IMR-90 (cell line): ENCODE measurements at regions of chr7 and their contacts with region 1.

Region 1: GRCh38 chr7:93715234-93715633 is 140.7 kb upstream of the CALCR start:
- DNase-seq: peak; percentile 39
- ATAC-seq: peak; percentile 82
- H3K4me3 ChIP-seq: no peak overlapping the region
- H3K27ac ChIP-seq: no peak overlapping the region
- H3K4me1 ChIP-seq: no peaks in the 10 kb centered on the region
- H3K27me3 ChIP-seq: no peaks in the 10 kb centered on the region; the same call in 1 of the 2 replicates
- CTCF ChIP-seq: peak; percentile 62
- POLR2A ChIP-seq: no peak
- RAD21 ChIP-seq: peak; percentile 63

Region 2: DNA sequence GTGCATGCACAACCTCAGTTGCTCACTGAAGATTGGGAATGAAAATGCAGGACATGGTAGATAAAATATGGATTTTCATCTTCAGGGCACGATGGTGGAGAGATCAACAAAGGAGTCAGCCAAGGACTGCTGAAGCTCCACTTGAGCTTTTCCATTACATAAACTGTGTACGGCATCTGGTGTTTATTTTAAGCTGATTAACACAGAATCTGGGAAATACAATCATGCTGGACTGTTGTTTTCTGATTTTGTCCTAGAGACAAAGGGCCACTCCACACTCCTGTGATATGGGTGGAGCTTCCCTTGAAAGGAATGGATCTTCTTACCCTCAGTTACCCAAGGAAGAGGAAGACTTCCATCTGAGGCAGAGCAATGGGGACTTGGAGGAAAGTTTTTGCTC is 718.1 kb before region 1 on chr7:
- CTCF ChIA-PET with region 1: no interaction called
- POLR2A ChIA-PET with region 1: no interaction called
- dilution Hi-C with region 1: no loop called
- in situ Hi-C with region 1: no loop called
- intact Hi-C with region 1: no loop called
- DNase-seq: no peak
- ATAC-seq: peak; percentile 77
- H3K4me3 ChIP-seq: no peak overlapping the region
- H3K27ac ChIP-seq: no peak overlapping the region
- H3K4me1 ChIP-seq: peaks cover 5% of the 10 kb centered on the region
- H3K27me3 ChIP-seq: no peaks in the 10 kb centered on the region
- CTCF ChIP-seq: no peak
- POLR2A ChIP-seq: no peak
- RAD21 ChIP-seq: no peak

Region 3: DNA sequence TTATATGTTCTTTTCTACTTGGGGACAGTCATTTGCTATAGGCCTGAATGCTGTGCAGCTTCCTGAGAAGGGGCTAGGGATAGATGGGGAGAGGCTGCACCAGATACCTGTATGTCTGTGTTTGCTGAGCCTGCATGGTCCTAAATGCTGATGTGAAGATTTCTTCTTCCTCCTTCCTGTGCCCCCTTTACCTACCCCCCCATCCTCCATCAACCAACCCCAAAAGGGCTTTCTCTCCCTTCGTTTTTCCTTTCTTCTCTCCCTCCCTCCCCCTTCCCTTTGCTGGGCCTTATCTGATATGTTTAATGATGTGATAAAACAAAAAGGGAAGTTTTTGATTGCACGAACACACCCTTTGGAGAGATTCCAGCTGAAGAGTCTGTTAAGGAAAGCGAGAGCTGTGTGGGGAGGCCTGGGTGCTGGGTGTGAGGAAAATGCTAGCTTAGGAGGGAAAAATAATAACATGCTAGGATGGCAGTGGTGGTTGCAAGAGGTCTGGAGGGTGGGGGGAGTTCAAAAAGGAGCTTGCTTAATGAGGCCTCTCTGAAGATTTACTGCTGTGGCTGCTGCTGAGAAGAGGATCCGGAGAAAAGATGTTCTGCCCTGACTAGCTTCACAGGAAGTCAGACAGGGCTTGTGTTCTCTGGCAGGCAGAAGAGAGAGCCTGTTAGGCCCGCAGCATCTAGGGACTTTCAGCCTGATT is 699.3 kb before region 1 on chr7:
- CTCF ChIA-PET with region 1: no interaction called
- POLR2A ChIA-PET with region 1: no interaction called
- dilution Hi-C with region 1: no loop called
- in situ Hi-C with region 1: no loop called
- intact Hi-C with region 1: no loop called
- DNase-seq: peak; percentile 45
- ATAC-seq: 0 out of 2 replicates have a peak, but pooled peaks have one; percentile 3
- H3K4me3 ChIP-seq: no peak overlapping the region
- H3K27ac ChIP-seq: peak overlapping the region; percentile 93
- H3K4me1 ChIP-seq: peaks cover 39% of the 10 kb centered on the region
- H3K27me3 ChIP-seq: no peaks in the 10 kb centered on the region
- CTCF ChIP-seq: no peak
- POLR2A ChIP-seq: no peak
- RAD21 ChIP-seq: no peak

Region 4: GRCh38 chr7:93704217-93704616 is 11.0 kb before region 1 on chr7:
- CTCF ChIA-PET with region 1: no interaction called
- POLR2A ChIA-PET with region 1: no interaction called
- dilution Hi-C with region 1: no loop called
- in situ Hi-C with region 1: no loop called
- intact Hi-C with region 1: no loop called
- DNase-seq: no peak
- ATAC-seq: no peak
- H3K4me3 ChIP-seq: no peak overlapping the region
- H3K27ac ChIP-seq: no peak overlapping the region
- H3K4me1 ChIP-seq: no peaks in the 10 kb centered on the region
- H3K27me3 ChIP-seq: no peaks in the 10 kb centered on the region
- CTCF ChIP-seq: no peak
- POLR2A ChIP-seq: no peak
- RAD21 ChIP-seq: no peak

Region 5: GRCh38 chr7:93778384-93778783 is 63.1 kb after region 1 on chr7:
- CTCF ChIA-PET with region 1: no interaction called
- POLR2A ChIA-PET with region 1: no interaction called
- dilution Hi-C with region 1: no loop called
- in situ Hi-C with region 1: no loop called
- intact Hi-C with region 1: no loop called
- DNase-seq: no peak
- ATAC-seq: no peak
- H3K4me3 ChIP-seq: no peak overlapping the region
- H3K27ac ChIP-seq: no peak overlapping the region
- H3K4me1 ChIP-seq: no peaks in the 10 kb centered on the region
- H3K27me3 ChIP-seq: peaks cover 2% of the 10 kb centered on the region
- CTCF ChIP-seq: no peak
- POLR2A ChIP-seq: no peak
- RAD21 ChIP-seq: no peak

Region 6: DNA sequence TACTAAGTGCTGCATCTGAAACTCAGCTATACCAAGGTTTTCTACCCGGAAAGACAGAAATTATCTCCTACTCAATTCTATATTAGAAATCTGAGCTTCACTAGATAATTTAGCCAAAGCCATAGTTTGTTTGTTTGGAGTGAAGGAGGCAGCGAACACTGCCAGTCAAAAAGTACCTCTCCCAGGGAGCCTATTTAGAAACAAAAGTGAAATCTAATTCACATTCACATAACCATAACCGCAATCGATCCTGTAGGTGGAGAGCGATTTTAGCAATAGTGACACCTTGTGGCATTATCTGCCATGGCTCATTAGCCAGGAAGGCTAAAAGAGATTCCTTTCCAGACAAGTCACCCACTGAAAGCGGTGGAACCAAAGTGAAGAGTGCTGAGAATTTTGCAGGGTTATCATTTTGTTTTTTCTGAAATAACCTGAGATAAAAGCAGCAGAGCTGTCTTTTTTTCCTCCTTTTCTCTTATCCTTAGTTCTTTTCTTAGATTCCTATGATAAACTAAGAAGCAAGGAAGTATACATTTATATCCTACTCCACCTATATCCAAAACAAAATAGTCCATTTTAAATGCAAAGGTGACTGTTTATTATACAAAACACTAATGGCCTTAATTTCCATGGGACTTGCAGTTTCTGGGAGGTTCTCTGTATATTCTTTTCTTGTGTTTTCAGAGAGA is 372.6 kb after region 1 on chr7:
- CTCF ChIA-PET with region 1: no interaction called
- POLR2A ChIA-PET with region 1: no interaction called
- dilution Hi-C with region 1: no loop called
- in situ Hi-C with region 1: no loop called
- intact Hi-C with region 1: loop called (anchors 2 kb)
- DNase-seq: peak; percentile 85
- ATAC-seq: peak; percentile 87
- H3K4me3 ChIP-seq: peak overlapping the region; percentile 15; the same call in 1 of the 2 replicates
- H3K27ac ChIP-seq: no peak overlapping the region
- H3K4me1 ChIP-seq: peaks cover 9% of the 10 kb centered on the region
- H3K27me3 ChIP-seq: no peaks in the 10 kb centered on the region
- CTCF ChIP-seq: peak; percentile 78
- POLR2A ChIP-seq: no peak
- RAD21 ChIP-seq: peak; percentile 84